ENCODE measurements at regions of chr12 and their contacts with region 1.

Region 1: DNA sequence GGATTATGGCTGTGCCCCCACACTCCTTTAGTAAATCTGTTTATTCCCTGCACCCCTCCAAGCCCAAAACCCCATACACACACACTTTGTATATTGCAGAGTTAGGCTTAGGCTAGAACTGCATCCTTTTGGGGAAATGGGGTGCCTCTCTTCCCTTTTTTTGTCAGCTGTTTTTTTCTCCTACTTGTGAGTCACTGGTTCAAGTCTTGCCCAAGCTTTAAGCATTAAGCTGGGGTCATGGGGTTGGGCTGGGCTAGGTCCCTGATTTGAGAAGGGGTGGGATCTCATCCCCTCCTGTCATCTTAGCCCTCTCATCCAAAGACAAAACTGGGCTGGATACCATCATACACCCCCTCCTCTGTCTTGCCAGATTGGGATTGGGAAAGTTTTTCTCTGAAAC is 1.6 kb downstream of the LRP1 start:
- DNase-seq: no peak
- H3K4me3 ChIP-seq: peak overlapping the region; percentile 82
- H3K4me1 ChIP-seq: peaks cover 10% of the 10 kb centered on the region
- H3K27me3 ChIP-seq: no peaks in the 10 kb centered on the region

Region 2: DNA sequence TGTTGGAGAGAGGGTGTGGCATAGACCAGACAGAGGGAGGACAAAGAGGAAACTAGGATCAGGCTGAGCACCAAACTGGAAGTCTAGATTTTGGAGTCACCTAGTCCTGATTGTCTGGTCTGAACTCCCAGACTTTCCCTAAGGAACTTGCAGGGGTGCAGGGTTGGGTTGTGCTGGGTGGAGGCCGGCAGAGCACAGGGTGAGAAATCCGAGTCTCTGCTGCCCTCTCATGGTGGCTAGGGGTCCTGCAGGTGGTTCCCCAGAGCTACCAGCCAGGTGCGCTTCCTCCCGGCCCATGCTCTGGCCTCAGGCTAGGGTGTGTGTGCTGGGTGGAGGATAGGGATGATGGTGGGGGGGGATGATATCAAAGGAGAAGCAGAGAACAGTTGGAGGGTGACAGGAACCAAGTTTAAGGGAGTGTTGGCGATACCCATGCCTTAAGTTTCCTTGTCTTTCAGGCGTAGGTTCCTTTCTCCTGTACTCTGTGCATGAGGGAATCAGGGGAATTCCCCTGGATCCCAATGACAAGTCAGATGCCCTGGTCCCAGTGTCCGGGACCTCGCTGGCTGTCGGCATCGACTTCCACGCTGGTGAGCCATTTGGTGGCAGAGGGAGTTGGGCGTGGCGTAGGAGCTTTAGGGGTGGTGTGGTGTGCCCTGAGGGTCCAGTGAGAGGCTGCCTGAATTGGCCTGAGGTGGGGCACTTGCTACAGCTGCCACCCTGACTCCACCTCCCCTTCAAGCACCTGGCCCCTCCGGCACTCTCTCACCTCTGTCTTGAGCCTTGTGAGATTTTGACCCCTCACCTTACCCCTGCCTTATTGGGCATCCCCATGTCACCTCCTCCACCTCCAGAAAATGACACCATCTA is 53.3 kb after region 1 on chr12:
- in situ Hi-C with region 1: loop called (anchors 5 kb)
- DNase-seq: peak; percentile 55 to 89
- H3K4me3 ChIP-seq: no peak overlapping the region
- H3K4me1 ChIP-seq: no peaks in the 10 kb centered on the region
- H3K27me3 ChIP-seq: no peaks in the 10 kb centered on the region

Measured in HAP-1 (cell line).